ENCODE measurements at regions of chr1 and their contacts with region 1.

Region 1: DNA sequence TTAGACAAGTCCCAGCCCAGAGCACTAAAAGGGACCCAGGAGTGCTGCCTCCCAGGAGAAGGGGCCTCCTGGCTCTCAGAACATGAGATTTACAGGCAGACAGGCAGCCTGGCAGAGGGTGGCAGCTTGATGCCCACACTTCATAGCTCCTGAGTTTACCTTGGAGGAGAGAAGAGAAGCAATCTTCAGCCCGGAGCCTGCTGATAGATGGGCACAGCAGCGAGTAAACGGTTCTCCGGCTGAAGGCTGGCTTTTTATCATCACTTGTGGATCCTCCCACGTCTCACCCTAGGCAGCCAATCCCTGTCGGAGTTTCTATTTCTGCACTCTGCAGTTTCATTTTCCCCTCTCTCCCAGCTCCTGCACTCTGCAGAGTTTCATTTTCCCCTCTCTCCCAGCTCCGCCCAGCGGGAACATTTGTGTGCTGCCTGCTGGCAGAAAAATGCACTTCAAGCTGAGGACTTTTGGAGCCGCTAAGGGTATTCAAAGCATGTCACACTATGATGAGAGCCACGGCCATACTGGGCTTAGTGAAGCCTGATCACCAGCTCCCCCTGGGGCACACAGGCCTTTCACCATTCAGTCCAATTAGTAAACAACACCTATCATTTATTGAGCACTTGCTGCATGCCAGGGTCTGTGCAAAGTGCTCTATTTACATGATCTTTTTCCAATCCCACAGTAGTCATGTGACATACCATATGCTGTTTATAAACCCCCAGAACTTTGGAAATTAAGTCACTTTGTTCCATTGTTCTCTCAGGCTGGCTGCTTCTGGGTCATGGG is at the start of gene IFI6:
- DNase-seq: peak in 1 of 2 experiments; percentile 72
- H3K4me3 ChIP-seq: peak within 1 kb of the TSS; percentile 2 to 51 (median 28); a peak in 5 of 8 replicates
- H3K27ac ChIP-seq: no peak within 1 kb of the TSS
- H3K4me1 ChIP-seq: peaks cover 2 to 11% (median 7%) of the 10 kb centered on the region in 4 experiments; a peak in 5 of 7 replicates
- H3K27me3 ChIP-seq: peaks cover 0 to 7% (median 4%) of the 10 kb centered on the region in 4 experiments; a peak in 2 of 7 replicates
- CTCF ChIP-seq: peak in 2 of 3 experiments; percentile 15 to 43; a peak in 2 of 4 replicates
- EP300 ChIP-seq: no peak
- POLR2A ChIP-seq: no peak
- RAD21 ChIP-seq: peak in 1 of 2 experiments; percentile 37; a peak in 2 of 4 replicates
- total RNA-seq, gene IFI6: 4.9 and 6.1 TPM in 2 replicates

Region 2: DNA sequence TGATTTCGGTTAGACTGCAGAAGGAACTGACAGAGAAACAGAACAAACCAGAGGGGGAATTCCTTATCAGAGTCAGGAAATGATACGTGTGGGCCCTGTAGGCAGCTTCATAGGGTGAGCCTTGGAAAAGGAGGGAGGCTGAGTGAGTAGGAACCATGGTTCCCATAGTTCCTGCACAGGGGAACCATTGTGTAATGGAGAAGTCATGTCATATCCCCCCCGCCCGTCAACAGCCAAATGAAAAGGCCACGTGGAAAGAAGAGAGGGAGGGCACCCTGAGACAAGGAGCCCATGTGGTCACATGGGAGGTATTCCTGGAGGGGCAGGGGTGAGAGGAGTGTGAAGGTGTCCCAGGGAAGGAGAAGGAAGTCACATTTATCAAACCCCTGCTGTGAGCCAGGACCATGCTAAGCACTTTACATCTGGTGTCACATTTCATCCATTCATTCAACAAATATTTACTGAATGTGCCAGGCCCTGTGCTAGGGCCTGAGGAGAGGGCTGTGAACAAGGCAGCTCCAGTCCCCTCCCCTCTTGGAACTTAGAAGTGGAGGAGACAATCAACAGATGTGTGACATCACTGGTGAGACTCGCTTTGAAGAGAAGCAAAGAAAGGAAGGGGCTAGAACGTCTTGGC is 21.5 kb before region 1 on chr1:
- CTCF ChIA-PET with region 1: interaction called, 11 read pairs
- POLR2A ChIA-PET with region 1: no interaction called
- DNase-seq: no peak
- H3K4me3 ChIP-seq: no peak overlapping the region
- H3K27ac ChIP-seq: no peak overlapping the region
- H3K4me1 ChIP-seq: peaks cover 12 to 15% (median 14%) of the 10 kb centered on the region in 4 experiments
- H3K27me3 ChIP-seq: no peaks in the 10 kb centered on the region
- CTCF ChIP-seq: no peak
- EP300 ChIP-seq: no peak
- POLR2A ChIP-seq: no peak
- RAD21 ChIP-seq: no peak

Region 3: GRCh38 chr1:27725374-27726173 is 53.4 kb after region 1 on chr1 and contains the start of gene FAM76A:
- CTCF ChIA-PET with region 1: interaction called, 11 read pairs
- POLR2A ChIA-PET with region 1: interaction called, 5 read pairs
- DNase-seq: peak; percentile 98 to 99
- H3K4me3 ChIP-seq: peak within 1 kb of the TSS; percentile 77 to 89 (median 86)
- H3K27ac ChIP-seq: peak within 1 kb of the TSS; percentile 65
- H3K4me1 ChIP-seq: peaks cover 0 to 5% (median under 1%) of the 10 kb centered on the region in 4 experiments; a peak in 3 of 7 replicates
- H3K27me3 ChIP-seq: peaks cover 0 to 2% (median 0%) of the 10 kb centered on the region in 4 experiments; a peak in 1 of 7 replicates
- CTCF ChIP-seq: peak in 2 of 3 experiments; percentile 33 to 53; a peak in 3 of 4 replicates
- EP300 ChIP-seq: peak in 1 of 2 experiments; percentile 10; a peak in 1 of 3 replicates
- POLR2A ChIP-seq: peak in 1 of 2 experiments; percentile 45; a peak in 2 of 3 replicates
- RAD21 ChIP-seq: peak; percentile 11 to 17; a peak in 1 of 4 replicates
- total RNA-seq, gene FAM76A: 12.8 and 16.2 TPM in 2 replicates

Region 4: DNA sequence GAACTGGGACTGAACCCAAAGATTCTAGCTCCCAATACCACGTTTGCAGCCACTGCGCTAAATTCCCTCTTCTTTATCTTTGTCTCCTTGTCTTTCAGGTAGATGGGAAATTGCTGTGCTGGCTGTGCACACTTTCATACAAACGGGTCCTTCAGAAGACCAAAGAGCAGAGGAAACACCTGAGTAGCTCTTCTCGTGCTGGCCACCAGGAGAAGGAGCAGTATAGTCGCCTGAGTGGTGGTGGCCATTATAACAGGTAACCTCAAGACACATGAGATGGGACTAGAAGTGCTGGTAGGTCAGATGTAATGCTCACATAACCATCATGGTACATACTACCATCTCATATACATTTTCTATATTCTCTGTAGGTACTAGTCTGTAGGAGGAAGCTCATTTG is 72.4 kb after region 1 on chr1:
- CTCF ChIA-PET with region 1: interaction called, 12 read pairs
- POLR2A ChIA-PET with region 1: no interaction called
- DNase-seq: no peak
- H3K4me3 ChIP-seq: no peak overlapping the region
- H3K27ac ChIP-seq: no peak overlapping the region
- H3K4me1 ChIP-seq: no peaks in the 10 kb centered on the region
- H3K27me3 ChIP-seq: no peaks in the 10 kb centered on the region
- CTCF ChIP-seq: peak in 1 of 3 experiments; percentile 18; a peak in 1 of 4 replicates
- EP300 ChIP-seq: no peak
- POLR2A ChIP-seq: no peak
- RAD21 ChIP-seq: no peak